GM18951 (cell line): ENCODE measurements at regions of chr13 and their contacts with region 1.

Region 1: DNA sequence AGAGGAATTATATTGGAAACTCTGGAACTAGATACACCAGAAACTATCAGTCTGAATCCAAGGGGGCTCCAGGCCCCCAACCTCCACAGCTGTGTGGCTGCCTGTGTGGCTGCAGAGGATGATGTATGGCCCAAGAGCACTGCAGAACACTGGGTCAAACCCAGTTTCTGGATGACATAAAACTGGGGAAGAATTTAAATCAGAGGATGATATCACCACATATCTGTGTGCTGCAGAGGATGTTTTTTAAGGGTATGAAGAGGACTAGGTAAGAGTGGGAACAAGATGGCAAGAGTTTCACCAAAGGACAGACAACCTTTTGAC is 226.4 kb downstream of the SUCLA2 start:
- POLR2A ChIP-seq: no peak

Region 2: DNA sequence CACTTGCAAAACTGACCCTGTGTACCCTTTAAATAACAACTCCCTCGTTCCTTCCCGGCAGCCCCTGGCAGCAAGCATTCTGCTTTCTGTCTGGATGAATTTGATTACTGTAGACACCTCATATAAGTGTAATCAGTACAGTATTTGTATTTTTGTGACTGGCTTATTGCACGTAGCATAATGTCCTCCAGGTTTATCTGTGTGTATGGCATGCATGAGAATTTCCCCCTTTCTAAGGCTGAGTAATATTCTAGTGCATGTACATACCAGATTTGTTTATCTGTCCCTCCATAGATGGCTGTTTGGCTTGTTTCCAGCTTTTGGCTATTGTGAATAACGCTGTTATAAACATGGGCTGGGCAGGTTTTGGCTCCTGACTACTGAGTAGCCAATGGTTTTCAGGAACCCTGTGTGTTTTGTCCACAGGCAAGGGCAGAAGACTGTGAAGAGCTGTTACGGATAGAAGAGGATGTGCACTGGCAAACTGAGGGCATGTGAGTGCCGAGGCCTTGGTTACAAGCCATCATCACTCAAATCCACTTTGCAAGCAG is 1075.6 kb before region 1 on chr13:
- in situ Hi-C with region 1: no loop called
- POLR2A ChIP-seq: no peak

Region 3: GRCh38 chr13:46831588-46832194 is 942.9 kb before region 1 on chr13:
- in situ Hi-C with region 1: loop called (anchors 25 kb)
- POLR2A ChIP-seq: no peak

Region 4: GRCh38 chr13:47564041-47564440 is 210.6 kb before region 1 on chr13:
- in situ Hi-C with region 1: no loop called
- POLR2A ChIP-seq: no peak

Region 5: GRCh38 chr13:47661076-47661475 is 113.6 kb before region 1 on chr13:
- in situ Hi-C with region 1: no loop called
- POLR2A ChIP-seq: no peak